A549 (cell line): ENCODE measurements at regions of chr16 and their contacts with region 1.

Region 1: DNA sequence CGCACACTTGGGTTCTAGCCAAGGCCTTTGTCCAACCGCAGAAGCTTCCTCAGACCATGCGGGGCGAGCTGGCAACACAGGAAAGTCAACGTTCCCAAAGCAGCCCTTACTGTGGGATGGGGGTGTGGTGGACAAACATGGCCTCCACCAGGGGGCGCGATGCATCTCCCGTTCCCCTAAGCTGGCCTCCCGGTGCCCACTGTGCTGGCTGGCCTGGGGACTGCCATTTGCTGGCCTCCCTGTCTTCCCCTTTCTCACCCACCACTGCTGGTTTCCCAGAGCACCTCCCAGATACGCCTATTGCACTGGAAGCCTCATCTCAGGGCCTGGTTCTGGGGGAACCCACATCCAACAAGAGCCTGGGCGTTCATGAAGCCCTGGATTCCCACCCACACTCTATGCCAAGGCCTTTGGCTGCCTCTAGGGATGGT is 145.3 kb downstream of the IRF8 start:
- DNase-seq: peak; percentile 57 to 78
- ATAC-seq: peak in 1 of 2 experiments; percentile 93; a peak in 3 of 6 replicates
- H3K4me3 ChIP-seq: no peak overlapping the region
- H3K27ac ChIP-seq: no peak overlapping the region
- H3K4me1 ChIP-seq: no peaks in the 10 kb centered on the region
- CTCF ChIP-seq: peak; percentile 32; the same call in 2 of the 3 replicates
- EP300 ChIP-seq: no peak
- POLR2A ChIP-seq: no peak
- RAD21 ChIP-seq: peak in 1 of 2 experiments; percentile 44; a peak in 2 of 5 replicates

Region 2: DNA sequence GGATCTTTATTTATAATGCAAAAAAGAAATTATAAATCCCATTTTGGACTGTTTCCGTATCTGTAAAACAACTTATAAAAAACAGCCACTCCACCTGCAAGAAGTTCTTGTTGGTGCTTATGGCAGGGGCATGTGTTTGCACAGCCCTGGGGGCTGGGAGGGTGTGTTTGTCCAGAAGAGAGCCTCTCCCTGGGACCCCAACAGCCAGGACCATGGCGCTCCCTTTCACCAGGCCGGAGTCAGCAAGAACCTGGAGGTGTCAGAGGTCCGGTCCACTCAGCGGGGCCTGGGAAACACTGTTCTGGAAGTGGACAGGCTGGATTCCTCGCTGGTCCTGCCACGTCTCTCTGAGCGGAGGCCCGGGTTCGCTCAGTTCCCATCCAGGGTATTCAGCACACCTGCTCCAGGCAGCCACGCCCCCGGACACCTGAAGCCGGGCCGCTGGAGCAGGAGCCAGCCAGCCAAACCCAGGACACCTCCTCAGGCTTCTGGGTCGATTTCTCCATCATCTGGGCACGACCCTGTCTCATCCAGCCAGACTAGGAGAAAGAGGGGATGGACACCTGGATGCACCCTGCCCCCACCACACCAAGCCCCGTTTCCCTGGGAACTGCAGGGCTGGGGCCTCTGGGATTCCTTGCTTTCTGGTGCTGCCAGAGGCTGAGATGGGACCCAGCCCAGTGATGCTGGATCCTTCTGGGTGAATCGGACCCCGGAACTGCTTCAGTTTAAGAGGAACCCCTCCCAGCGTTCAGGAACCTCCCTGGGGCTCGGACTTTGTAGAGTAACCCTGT is 336.5 kb before region 1 on chr16:
- CTCF ChIA-PET with region 1: no interaction called
- POLR2A ChIA-PET with region 1: no interaction called
- DNase-seq: no peak
- ATAC-seq: no peak
- H3K4me3 ChIP-seq: no peak overlapping the region
- H3K27ac ChIP-seq: no peak overlapping the region
- H3K4me1 ChIP-seq: no peaks in the 10 kb centered on the region
- CTCF ChIP-seq: no peak
- EP300 ChIP-seq: no peak
- POLR2A ChIP-seq: no peak
- RAD21 ChIP-seq: no peak

Region 3: DNA sequence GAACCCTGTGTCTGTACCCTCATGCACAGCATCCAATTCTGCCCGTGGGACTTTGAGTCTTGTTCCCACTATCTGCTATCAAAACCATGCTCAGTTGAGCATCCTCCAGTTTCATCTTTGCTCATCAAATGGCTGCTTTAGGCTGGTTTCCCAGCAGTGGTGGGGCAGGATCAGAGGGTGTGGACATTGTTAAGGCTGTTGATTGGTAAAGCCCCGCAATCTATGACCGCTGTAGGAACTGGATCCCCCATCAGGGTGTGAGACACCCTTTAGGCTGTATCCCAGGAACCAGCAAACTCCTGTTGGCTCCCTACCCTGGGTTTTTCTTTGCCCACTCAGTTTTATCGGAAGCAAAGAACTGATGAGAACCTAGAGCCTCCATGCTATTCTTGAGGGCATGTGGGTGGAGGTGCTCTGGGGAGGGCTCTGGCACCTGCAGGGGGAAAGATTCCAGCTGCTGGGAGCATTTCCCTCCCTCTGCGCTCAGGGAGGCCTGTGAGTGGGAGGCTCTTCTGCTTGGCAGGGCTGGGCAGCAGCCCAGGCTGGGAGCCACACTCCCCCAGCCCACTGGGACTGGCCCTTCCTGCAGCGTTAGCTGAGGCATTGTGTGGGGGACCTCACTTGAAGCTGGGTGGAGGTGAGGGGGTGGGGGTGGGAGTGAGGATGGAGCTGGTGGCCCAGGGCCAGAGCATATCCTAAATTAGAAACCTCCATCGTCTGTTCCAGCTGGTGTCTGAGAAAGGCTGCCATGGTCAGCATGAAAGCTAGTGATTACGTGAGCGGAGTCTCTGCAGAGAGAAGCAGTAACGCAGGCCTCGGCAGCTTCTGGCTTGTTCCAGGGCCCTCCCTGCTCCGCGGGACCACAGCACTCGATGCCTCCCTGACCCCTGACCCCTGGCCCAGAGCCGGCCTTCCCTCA is 15.3 kb after region 1 on chr16:
- CTCF ChIA-PET with region 1: interaction called, 10 read pairs
- POLR2A ChIA-PET with region 1: no interaction called
- DNase-seq: no peak
- ATAC-seq: no peak
- H3K4me3 ChIP-seq: no peak overlapping the region
- H3K27ac ChIP-seq: no peak overlapping the region
- H3K4me1 ChIP-seq: no peaks in the 10 kb centered on the region
- CTCF ChIP-seq: no peak
- EP300 ChIP-seq: no peak
- POLR2A ChIP-seq: no peak
- RAD21 ChIP-seq: no peak

Region 4: DNA sequence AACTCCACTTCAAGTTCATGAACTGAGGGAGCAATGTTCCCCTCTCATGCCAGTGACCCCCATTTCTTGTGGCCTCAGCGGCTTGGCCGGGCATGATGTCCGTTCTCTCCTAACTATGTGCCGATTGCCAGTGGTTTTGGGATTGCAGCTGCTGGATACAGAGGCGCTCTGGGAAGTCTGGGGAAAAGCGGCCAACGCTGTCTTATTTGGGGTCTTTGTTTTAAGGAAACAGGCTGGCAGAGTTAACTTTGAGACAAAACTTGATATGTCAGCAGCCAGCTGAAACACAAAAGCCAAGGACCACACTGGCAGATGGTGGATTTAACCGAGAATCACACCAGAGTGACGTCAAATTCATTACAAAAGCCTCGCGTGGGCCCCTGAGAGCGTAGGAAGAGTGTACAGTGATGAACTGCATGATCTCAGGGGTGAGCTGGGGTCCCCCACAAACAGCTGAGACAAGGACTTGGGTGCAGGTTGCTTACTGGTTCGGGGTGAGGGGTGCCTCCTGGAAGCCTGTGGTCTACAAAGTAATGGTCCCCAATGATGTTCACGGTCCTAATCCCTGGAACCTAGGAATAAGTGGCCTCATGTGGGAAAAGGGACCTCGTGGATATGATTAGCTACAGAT is 35.1 kb after region 1 on chr16:
- CTCF ChIA-PET with region 1: no interaction called
- POLR2A ChIA-PET with region 1: no interaction called
- DNase-seq: no peak
- ATAC-seq: no peak
- H3K4me3 ChIP-seq: no peak overlapping the region
- H3K27ac ChIP-seq: no peak overlapping the region
- H3K4me1 ChIP-seq: no peaks in the 10 kb centered on the region
- CTCF ChIP-seq: no peak
- EP300 ChIP-seq: no peak
- POLR2A ChIP-seq: no peak
- RAD21 ChIP-seq: no peak